B cell (primary cell): ENCODE measurements at regions of chr7 and their contacts with region 1.

Region 1: GRCh38 chr7:36487756-36488336 is 98.2 kb downstream of the ANLN start:
- DNase-seq: peak; percentile 58
- ATAC-seq: peak; percentile 36
- H3K4me3 ChIP-seq: no peak overlapping the region
- H3K4me3 Mint-ChIP-seq: no peak overlapping the region
- H3K27ac ChIP-seq: no peak overlapping the region
- H3K27ac Mint-ChIP-seq: no peak overlapping the region
- H3K4me1 ChIP-seq: no peaks in the 10 kb centered on the region
- H3K4me1 Mint-ChIP-seq: no peaks in the 10 kb centered on the region
- H3K27me3 ChIP-seq: no peaks in the 10 kb centered on the region
- H3K27me3 Mint-ChIP-seq: peaks cover 13% of the 10 kb centered on the region
- CTCF ChIP-seq: peak; percentile 76

Region 2: GRCh38 chr7:36810489-36810888 is 322.6 kb after region 1 on chr7:
- CTCF ChIA-PET with region 1: no interaction called
- POLR2A ChIA-PET with region 1: no interaction called
- intact Hi-C with region 1: no loop called
- DNase-seq: no peak
- ATAC-seq: no peak
- H3K4me3 ChIP-seq: no peak overlapping the region
- H3K4me3 Mint-ChIP-seq: no peak overlapping the region
- H3K27ac ChIP-seq: no peak overlapping the region
- H3K27ac Mint-ChIP-seq: no peak overlapping the region
- H3K4me1 ChIP-seq: no peaks in the 10 kb centered on the region
- H3K4me1 Mint-ChIP-seq: no peaks in the 10 kb centered on the region
- H3K27me3 ChIP-seq: no peaks in the 10 kb centered on the region
- H3K27me3 Mint-ChIP-seq: peaks cover 21% of the 10 kb centered on the region
- CTCF ChIP-seq: no peak

Region 3: DNA sequence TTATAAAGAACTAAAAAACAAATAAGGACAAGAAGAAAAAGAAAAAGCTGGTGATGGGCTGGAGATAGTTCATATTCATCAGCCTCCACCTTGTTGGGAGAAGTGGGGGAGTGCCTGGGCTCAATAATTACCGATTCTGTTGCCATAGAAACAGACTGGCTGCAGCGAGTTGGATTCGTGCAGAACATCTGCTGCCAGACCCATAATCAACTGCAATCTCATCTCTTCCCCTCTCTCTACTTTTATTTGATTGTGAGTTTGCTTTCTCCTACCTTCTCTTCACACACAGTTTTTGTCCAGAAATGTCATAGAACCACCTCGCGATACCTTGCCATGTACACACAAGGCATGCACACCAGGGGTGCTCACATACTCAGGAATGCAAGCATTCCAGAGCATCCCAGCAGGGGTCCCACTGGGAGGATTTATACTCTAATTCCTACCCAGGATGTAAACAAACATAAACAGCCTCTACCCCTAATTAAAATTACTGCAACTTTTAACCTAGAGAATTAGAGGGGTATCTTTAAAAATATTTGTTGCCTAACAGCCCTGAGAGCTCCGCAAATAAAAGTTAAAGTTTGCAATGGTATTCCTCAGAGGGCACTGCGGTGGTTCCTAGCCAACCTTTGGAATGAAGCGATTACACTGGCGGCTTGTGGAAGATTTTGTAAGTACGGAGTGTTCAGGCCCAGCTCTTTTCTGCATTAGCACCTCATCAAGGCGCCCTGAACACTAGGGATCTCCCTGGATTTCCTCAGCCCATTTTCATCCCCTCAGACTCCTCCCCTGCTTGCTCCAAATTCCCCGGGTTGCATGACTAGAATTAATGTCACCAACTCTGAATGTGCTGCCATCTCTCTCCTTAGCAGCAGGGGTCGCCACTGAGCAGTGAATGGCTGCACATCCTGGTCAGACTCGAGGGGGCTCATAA is 498.9 kb after region 1 on chr7:
- CTCF ChIA-PET with region 1: interaction called, 3 read pairs
- POLR2A ChIA-PET with region 1: no interaction called
- intact Hi-C with region 1: loop called (anchors 10 kb)
- DNase-seq: peak; percentile 61
- ATAC-seq: peak; percentile 56
- H3K4me3 ChIP-seq: no peak overlapping the region
- H3K4me3 Mint-ChIP-seq: no peak overlapping the region
- H3K27ac ChIP-seq: no peak overlapping the region
- H3K27ac Mint-ChIP-seq: no peak overlapping the region
- H3K4me1 ChIP-seq: peaks cover 15 to 18% of the 10 kb centered on the region in 2 donors
- H3K4me1 Mint-ChIP-seq: peaks cover 37% of the 10 kb centered on the region
- H3K27me3 ChIP-seq: no peaks in the 10 kb centered on the region
- H3K27me3 Mint-ChIP-seq: no peaks in the 10 kb centered on the region
- CTCF ChIP-seq: peak; percentile 88

Region 4: DNA sequence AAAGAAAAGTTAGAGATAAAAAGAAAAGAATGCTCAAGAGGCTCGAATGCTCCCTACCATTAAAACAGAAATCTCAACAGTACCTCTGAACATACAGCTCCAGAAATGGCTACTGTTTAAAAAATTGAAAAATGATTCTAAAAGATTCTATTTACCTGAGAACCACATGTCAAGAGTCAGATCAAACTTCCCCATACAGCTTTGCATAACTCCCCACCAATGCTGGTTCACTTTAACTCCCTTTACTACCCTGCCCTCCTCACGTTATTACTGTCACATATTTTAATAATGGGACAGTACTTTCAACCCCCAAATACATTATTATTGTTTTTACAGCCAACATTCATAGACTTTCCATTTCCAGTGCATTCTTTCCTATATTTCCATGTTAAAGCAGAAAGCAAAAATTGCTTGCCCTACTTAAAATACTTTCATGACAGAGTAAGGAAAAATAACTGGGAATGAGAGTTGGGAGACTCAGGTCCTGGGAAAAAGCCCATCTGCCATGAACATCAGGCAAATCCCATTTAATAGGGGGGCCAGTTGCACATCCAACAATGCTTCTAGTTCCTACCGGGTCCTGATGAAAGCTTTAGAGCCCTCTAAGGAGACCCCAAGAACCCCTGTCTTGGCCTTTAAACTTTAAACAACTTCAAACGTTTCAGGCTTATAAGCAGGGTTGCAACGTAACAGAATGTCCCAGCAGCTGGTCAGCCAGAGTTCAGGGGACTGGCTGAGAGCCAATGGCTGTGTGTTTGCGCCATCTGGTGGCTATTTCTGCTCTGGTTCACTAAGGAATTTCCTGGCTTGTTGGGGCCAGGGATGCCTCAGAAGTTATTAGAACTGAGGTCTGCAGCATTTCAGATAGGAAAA is 713.4 kb after region 1 on chr7:
- CTCF ChIA-PET with region 1: interaction called, 110 read pairs
- POLR2A ChIA-PET with region 1: no interaction called
- intact Hi-C with region 1: loop called (anchors 1 kb)
- DNase-seq: peak; percentile 52
- ATAC-seq: peak; percentile 36
- H3K4me3 ChIP-seq: no peak overlapping the region
- H3K4me3 Mint-ChIP-seq: no peak overlapping the region
- H3K27ac ChIP-seq: no peak overlapping the region
- H3K27ac Mint-ChIP-seq: no peak overlapping the region
- H3K4me1 ChIP-seq: peaks cover 3 to 9% of the 10 kb centered on the region in 2 donors
- H3K4me1 Mint-ChIP-seq: peaks cover 25% of the 10 kb centered on the region
- H3K27me3 ChIP-seq: no peaks in the 10 kb centered on the region
- H3K27me3 Mint-ChIP-seq: no peaks in the 10 kb centered on the region
- CTCF ChIP-seq: peak; percentile 66

Region 5: DNA sequence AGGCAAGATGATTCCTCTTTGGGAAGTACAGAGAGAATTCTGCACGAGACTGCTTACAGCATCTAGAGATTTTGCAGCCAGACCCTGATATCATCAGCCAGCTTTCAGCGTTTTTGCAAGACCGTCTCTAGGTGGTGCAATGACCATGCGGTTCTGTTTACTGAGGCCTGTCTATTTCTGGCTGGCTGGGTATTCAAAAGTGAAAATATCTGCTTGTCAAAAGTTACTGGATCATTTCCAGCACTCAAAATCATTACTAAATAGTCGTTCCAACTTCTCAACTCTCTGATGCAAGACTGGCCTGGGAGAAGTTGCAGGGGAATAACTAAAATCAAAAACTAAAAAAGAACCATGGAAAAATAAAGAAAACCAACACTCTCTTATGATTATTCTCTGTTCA is 720.7 kb after region 1 on chr7:
- CTCF ChIA-PET with region 1: interaction called, 13 read pairs
- POLR2A ChIA-PET with region 1: no interaction called
- intact Hi-C with region 1: no loop called
- DNase-seq: peak; percentile 53
- ATAC-seq: peak; percentile 81
- H3K4me3 ChIP-seq: no peak overlapping the region
- H3K4me3 Mint-ChIP-seq: no peak overlapping the region
- H3K27ac ChIP-seq: peak overlapping the region in 1 of 2 donors; percentile 31
- H3K27ac Mint-ChIP-seq: peak overlapping the region; percentile 32
- H3K4me1 ChIP-seq: peaks cover 7 to 11% of the 10 kb centered on the region in 2 donors
- H3K4me1 Mint-ChIP-seq: peaks cover 15% of the 10 kb centered on the region
- H3K27me3 ChIP-seq: no peaks in the 10 kb centered on the region
- H3K27me3 Mint-ChIP-seq: no peaks in the 10 kb centered on the region
- CTCF ChIP-seq: peak; percentile 63

Region 6: GRCh38 chr7:37510043-37510634 is 1022.3 kb after region 1 on chr7:
- CTCF ChIA-PET with region 1: no interaction called
- POLR2A ChIA-PET with region 1: no interaction called
- intact Hi-C with region 1: loop called (anchors 10 kb)
- DNase-seq: peak; percentile 46
- ATAC-seq: no peak
- H3K4me3 ChIP-seq: no peak overlapping the region
- H3K4me3 Mint-ChIP-seq: no peak overlapping the region
- H3K27ac ChIP-seq: no peak overlapping the region
- H3K27ac Mint-ChIP-seq: no peak overlapping the region
- H3K4me1 ChIP-seq: no peaks in the 10 kb centered on the region
- H3K4me1 Mint-ChIP-seq: no peaks in the 10 kb centered on the region
- H3K27me3 ChIP-seq: peaks cover 0 to 11% (median 2%) of the 10 kb centered on the region in 4 experiments
- H3K27me3 Mint-ChIP-seq: peaks cover 33% of the 10 kb centered on the region
- CTCF ChIP-seq: peak; percentile 88